Mucosa of descending colon (tissue), 3 donors: ENCODE measurements at regions of chr9 and their contacts with region 1.

Region 1: GRCh38 chr9:117487555-117488175 is 72.8 kb upstream of the ASTN2 start:
- DNase-seq: peak; percentile 64 to 85 (median 68)
- ATAC-seq: peak; percentile 98
- H3K4me3 ChIP-seq: no peak overlapping the region
- H3K4me1 ChIP-seq: no peaks in the 10 kb centered on the region
- CTCF ChIP-seq: peak; percentile 92

Region 2: GRCh38 chr9:117411548-117411947 is 76.1 kb before region 1 on chr9:
- intact Hi-C with region 1: no loop called
- DNase-seq: peak in 1 of 3 donors; percentile 39
- ATAC-seq: peak; percentile 53
- H3K4me3 ChIP-seq: no peak overlapping the region
- H3K4me1 ChIP-seq: no peaks in the 10 kb centered on the region
- CTCF ChIP-seq: peak; percentile 31

Region 3: GRCh38 chr9:117555964-117556629 is 68.4 kb after region 1 on chr9:
- intact Hi-C with region 1: loop called in 1 of 2 experiments (anchors 10 kb)
- DNase-seq: peak in 2 of 3 donors; percentile 70 to 91
- ATAC-seq: peak; percentile 81
- H3K4me3 ChIP-seq: no peak overlapping the region
- H3K4me1 ChIP-seq: no peaks in the 10 kb centered on the region
- CTCF ChIP-seq: no peak

Region 4: DNA sequence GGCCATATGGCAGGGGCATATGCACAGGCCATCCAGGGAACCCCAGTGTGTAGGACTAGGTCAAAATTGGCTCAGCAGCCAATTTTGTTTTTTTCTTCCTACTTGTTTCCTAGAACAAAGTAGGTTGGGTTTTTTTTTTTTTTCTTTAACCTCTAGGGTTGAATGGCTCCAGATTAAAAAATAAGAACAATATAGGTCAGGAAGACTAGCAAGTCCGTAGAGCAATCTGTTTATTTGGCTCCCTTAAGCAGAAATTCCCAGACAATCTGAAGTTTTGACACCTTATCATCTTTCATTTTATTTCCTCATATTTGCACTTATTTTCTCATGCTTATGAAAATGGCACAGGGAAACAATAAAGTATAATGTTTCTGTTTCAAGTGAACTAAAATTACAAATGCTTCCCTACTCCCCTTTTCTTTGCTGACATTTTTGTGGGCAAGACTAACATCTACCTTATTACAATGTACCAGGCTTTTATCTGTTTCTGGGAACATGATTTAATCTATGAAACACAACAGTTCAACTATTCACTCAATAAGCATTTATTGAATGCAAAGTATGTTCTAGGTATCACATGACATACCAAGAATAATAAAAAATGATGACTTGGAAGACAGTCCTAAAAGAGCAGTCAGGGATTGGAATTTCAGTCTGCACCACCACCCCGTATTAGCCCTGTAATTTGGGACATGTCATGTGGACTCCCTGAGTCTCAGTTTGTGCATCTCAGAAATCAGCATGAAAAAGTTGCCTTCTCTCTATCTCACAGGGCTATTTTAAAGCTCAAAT is 247.1 kb after region 1 on chr9:
- intact Hi-C with region 1: no loop called
- DNase-seq: no peak
- ATAC-seq: no peak
- H3K4me3 ChIP-seq: no peak overlapping the region
- H3K4me1 ChIP-seq: no peaks in the 10 kb centered on the region
- CTCF ChIP-seq: no peak